ENCODE measurements at regions of chr1 and their contacts with region 1.

Region 1: DNA sequence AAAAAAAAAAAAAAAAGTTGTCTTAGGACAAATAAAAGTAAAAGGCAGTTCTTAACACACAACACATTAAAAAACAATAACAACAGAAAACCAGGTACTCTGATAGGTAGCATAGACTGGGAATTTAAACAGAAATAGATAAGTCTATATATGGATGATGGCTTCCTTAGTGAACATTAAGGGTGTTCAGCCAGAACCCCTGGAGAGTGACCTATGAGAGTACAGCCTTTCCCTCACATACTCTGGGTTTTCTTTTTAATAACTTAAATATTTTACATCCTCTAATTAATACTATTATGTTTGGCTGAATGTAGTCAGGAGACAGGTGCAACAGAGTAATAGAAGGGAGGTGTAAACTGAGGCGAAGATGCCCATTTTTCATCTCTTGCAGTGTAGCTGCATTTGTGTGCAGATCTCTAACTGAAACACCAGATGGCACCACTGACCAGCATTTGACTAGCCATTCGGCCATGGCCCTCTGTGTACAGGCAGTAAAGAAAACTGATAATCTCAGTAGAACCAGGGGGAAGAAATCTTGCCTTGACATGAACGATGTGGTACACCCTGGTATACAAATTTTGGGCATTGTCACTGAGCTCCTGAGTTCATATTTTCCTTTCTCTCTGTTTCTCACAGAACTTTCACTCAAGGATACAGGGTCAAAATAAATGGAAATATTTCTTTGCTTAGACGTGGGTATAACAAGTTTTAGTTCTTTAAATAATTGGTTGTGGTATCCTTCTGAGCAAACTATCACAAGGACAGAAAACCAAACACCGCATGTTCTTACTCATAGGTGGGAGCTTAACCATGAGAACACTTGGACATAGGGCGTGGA is 7.6 kb downstream of the TTF2 start:
- DNase-seq: peak in 1 of 9 donors; percentile 26
- ATAC-seq: peak; percentile 87
- H3K4me3 ChIP-seq: no peak overlapping the region
- H3K4me3 Mint-ChIP-seq: no peak overlapping the region
- H3K27ac ChIP-seq: no peak overlapping the region
- H3K27ac Mint-ChIP-seq: peak overlapping the region in 1 of 9 donors; percentile 44
- H3K4me1 ChIP-seq: no peaks in the 10 kb centered on the region
- H3K4me1 Mint-ChIP-seq: peaks cover 5 to 41% (median 11%) of the 10 kb centered on the region in 7 donors
- H3K27me3 ChIP-seq: no peaks in the 10 kb centered on the region
- H3K27me3 Mint-ChIP-seq: no peaks in the 10 kb centered on the region

Region 2: GRCh38 chr1:116835910-116836498 is 231.7 kb before region 1 on chr1:
- CTCF ChIA-PET with region 1: no interaction called
- POLR2A ChIA-PET with region 1: interaction called, 12 read pairs
- intact Hi-C with region 1: no loop called
- DNase-seq: no peak
- ATAC-seq: no peak
- H3K4me3 ChIP-seq: no peak overlapping the region
- H3K4me3 Mint-ChIP-seq: no peak overlapping the region
- H3K27ac ChIP-seq: no peak overlapping the region
- H3K27ac Mint-ChIP-seq: no peak overlapping the region
- H3K4me1 ChIP-seq: no peaks in the 10 kb centered on the region
- H3K4me1 Mint-ChIP-seq: peaks cover 0 to 11% (median 3%) of the 10 kb centered on the region in 7 donors
- H3K27me3 ChIP-seq: no peaks in the 10 kb centered on the region
- H3K27me3 Mint-ChIP-seq: no peaks in the 10 kb centered on the region

Region 3: DNA sequence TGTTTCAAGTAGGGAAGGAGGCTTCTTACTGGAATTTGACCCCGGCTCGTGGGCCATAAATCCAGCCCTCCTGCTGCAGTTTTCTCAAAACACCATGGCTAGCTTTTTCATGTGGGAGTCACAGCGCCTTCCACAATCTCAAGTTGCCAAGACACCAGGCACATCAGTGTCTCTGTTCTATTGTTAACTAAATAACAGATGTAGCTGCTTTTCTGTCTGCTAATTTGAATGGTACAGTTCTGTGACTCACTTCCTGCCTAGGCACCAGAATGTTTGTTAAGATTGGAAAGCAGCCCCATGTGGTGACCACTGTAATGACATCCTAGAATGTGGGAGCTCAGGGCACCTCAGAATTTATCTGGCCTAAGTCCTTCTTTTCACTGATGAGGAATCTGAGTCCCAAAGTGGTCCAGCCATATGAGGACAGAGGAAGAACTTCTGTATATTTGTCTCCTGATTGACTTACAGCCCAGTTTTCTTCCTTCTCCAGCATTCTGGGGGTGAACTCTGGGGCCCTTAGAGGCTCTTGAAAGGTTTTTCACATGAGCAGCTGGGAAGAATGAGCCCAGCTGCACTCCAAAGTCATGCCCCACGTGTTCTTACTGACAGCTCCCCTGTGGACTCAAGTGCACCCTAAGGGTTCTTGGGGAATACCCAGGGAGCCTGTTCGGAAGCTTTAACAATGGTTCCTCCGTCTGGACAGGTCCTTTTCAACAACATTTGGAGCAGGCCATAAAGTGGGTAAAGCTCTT is 26.3 kb after region 1 on chr1:
- CTCF ChIA-PET with region 1: no interaction called
- POLR2A ChIA-PET with region 1: no interaction called
- intact Hi-C with region 1: loop called in 1 of 2 experiments (anchors 1 kb)
- DNase-seq: peak in 7 of 9 donors; percentile 2 to 31 (median 14)
- ATAC-seq: peak; percentile 79
- H3K4me3 ChIP-seq: no peak overlapping the region
- H3K4me3 Mint-ChIP-seq: no peak overlapping the region
- H3K27ac ChIP-seq: no peak overlapping the region
- H3K27ac Mint-ChIP-seq: peak overlapping the region in 3 of 9 donors; percentile 7 to 57 (median 12)
- H3K4me1 ChIP-seq: no peaks in the 10 kb centered on the region
- H3K4me1 Mint-ChIP-seq: peaks cover 0 to 19% (median 2%) of the 10 kb centered on the region in 7 donors
- H3K27me3 ChIP-seq: no peaks in the 10 kb centered on the region
- H3K27me3 Mint-ChIP-seq: no peaks in the 10 kb centered on the region

Region 4: DNA sequence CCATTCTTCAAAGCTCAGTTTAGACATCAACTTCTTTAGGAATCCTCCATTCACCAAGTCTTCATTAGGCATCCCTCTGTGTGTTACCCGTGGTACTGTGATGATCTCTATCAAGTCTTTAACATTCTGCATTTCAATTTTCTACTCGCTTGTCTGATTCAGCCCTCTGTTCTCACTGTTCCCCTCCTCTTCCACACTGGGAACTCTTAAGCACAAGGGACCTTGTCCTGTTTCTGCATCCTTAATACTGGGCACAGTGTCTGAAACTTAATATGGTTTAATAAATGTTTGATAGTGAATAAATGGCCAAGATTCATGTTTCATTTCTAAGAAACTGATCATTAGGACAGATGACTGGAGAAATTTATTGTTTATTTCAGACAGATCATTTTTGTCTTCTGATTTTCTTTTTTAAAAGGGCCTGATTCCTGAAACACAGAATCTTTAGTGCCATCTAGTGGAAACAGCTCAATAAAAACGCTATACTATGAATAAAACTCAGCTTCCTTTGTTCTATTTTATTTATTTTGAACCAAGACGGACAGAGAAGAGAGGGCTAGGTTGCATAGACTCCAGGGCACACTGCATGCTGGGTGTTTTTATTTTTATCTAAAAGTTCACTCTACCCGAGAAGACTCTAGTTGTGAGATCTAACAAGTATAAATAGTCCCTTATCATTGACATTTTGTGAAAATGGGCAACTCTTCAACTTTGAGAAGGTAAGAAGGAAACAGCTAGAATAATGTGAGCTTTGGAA is 60.7 kb after region 1 on chr1:
- CTCF ChIA-PET with region 1: interaction called, 11 read pairs
- POLR2A ChIA-PET with region 1: no interaction called
- intact Hi-C with region 1: loop called (anchors 1 kb)
- DNase-seq: peak in 5 of 9 donors; percentile 24 to 42 (median 31)
- ATAC-seq: peak; percentile 61
- H3K4me3 ChIP-seq: no peak overlapping the region
- H3K4me3 Mint-ChIP-seq: no peak overlapping the region
- H3K27ac ChIP-seq: no peak overlapping the region
- H3K27ac Mint-ChIP-seq: no peak overlapping the region
- H3K4me1 ChIP-seq: no peaks in the 10 kb centered on the region
- H3K4me1 Mint-ChIP-seq: peaks cover 0 to 5% (median 5%) of the 10 kb centered on the region in 7 donors
- H3K27me3 ChIP-seq: no peaks in the 10 kb centered on the region
- H3K27me3 Mint-ChIP-seq: peaks cover 5 to 30% (median 12%) of the 10 kb centered on the region in 5 donors

Region 5: DNA sequence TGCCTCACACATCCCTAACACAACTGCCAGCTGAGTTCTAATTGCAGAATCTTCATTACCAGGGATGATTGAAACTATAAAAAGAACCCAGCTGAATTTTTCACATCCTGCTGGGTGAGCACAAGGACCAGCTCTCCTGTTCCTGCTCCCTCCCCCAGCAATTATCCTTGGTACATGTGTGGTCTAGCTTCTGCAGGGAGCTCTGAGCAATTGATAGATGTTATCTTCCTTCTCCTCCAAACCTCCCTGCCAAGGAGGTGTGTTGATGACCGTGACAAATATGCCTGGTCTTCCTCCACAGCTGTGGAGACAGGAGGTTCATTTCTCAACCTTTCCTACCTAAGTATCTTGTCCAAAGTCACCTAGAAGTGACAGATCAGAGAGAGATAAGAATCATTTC is 234.1 kb after region 1 on chr1:
- CTCF ChIA-PET with region 1: no interaction called
- POLR2A ChIA-PET with region 1: no interaction called
- intact Hi-C with region 1: no loop called
- DNase-seq: no peak
- ATAC-seq: no peak
- H3K4me3 ChIP-seq: no peak overlapping the region
- H3K4me3 Mint-ChIP-seq: no peak overlapping the region
- H3K27ac ChIP-seq: no peak overlapping the region
- H3K27ac Mint-ChIP-seq: no peak overlapping the region
- H3K4me1 ChIP-seq: no peaks in the 10 kb centered on the region
- H3K4me1 Mint-ChIP-seq: no peaks in the 10 kb centered on the region
- H3K27me3 ChIP-seq: no peaks in the 10 kb centered on the region
- H3K27me3 Mint-ChIP-seq: no peaks in the 10 kb centered on the region

Measured in naive thymus-derived CD4-positive, alpha-beta T cell (primary cell).